PC-9 (cell line): ENCODE measurements at regions of chr20 and their contacts with region 1.

Region 1: GRCh38 chr20:37990571-37991151 is 42.6 kb downstream of the TTI1 start:
- DNase-seq: peak; percentile 74 to 80
- H3K4me3 ChIP-seq: no peak overlapping the region
- H3K27ac ChIP-seq: no peak overlapping the region
- H3K4me1 ChIP-seq: peaks cover 16% of the 10 kb centered on the region
- H3K27me3 ChIP-seq: no peaks in the 10 kb centered on the region
- CTCF ChIP-seq: no peak

Region 2: GRCh38 chr20:37559312-37560027 is 431.2 kb before region 1 on chr20:
- CTCF ChIA-PET with region 1: interaction called, 14 read pairs
- POLR2A ChIA-PET with region 1: no interaction called
- intact Hi-C with region 1: loop called (anchors 2 kb)
- DNase-seq: no peak
- H3K4me3 ChIP-seq: no peak overlapping the region
- H3K27ac ChIP-seq: no peak overlapping the region
- H3K4me1 ChIP-seq: no peaks in the 10 kb centered on the region
- H3K27me3 ChIP-seq: peaks cover 7% of the 10 kb centered on the region; the same call in 1 of the 2 replicates
- CTCF ChIP-seq: no peak

Region 3: DNA sequence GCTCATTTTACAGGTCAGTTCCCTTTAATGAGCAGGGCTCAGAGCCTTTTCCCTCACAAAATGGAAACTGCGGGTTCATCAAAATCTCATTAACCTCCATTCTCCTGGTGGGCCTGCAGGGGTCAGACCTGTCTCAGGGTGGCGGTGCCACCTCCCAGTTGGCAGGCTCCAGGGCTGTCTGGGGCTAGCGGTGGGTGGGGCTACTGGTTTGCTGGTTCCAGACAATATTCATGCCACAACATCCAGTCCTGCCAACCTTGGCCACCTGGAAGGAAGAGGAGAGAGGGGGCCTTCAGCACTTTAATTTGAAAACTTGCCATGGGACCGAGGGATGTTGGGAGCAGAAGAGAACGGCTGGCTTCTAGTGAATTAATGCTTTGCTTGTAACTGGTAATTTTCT is 338.7 kb before region 1 on chr20:
- CTCF ChIA-PET with region 1: no interaction called
- POLR2A ChIA-PET with region 1: no interaction called
- intact Hi-C with region 1: loop called (anchors 1 kb)
- DNase-seq: peak in 1 of 2 experiments; percentile 68
- H3K4me3 ChIP-seq: no peak overlapping the region
- H3K27ac ChIP-seq: no peak overlapping the region
- H3K4me1 ChIP-seq: no peaks in the 10 kb centered on the region
- H3K27me3 ChIP-seq: peaks cover 6% of the 10 kb centered on the region
- CTCF ChIP-seq: peak; percentile 67

Region 4: GRCh38 chr20:37816003-37816402 is 174.7 kb before region 1 on chr20:
- CTCF ChIA-PET with region 1: interaction called, 10 read pairs
- POLR2A ChIA-PET with region 1: no interaction called
- intact Hi-C with region 1: no loop called
- DNase-seq: no peak
- H3K4me3 ChIP-seq: no peak overlapping the region
- H3K27ac ChIP-seq: no peak overlapping the region
- H3K4me1 ChIP-seq: no peaks in the 10 kb centered on the region
- H3K27me3 ChIP-seq: no peaks in the 10 kb centered on the region
- CTCF ChIP-seq: no peak

Region 5: GRCh38 chr20:37880726-37881591 is 109.7 kb before region 1 on chr20:
- CTCF ChIA-PET with region 1: no interaction called
- POLR2A ChIA-PET with region 1: no interaction called
- intact Hi-C with region 1: no loop called
- DNase-seq: peak in 1 of 2 experiments; percentile 45
- H3K4me3 ChIP-seq: no peak overlapping the region
- H3K27ac ChIP-seq: no peak overlapping the region
- H3K4me1 ChIP-seq: no peaks in the 10 kb centered on the region
- H3K27me3 ChIP-seq: no peaks in the 10 kb centered on the region
- CTCF ChIP-seq: no peak

Region 6: DNA sequence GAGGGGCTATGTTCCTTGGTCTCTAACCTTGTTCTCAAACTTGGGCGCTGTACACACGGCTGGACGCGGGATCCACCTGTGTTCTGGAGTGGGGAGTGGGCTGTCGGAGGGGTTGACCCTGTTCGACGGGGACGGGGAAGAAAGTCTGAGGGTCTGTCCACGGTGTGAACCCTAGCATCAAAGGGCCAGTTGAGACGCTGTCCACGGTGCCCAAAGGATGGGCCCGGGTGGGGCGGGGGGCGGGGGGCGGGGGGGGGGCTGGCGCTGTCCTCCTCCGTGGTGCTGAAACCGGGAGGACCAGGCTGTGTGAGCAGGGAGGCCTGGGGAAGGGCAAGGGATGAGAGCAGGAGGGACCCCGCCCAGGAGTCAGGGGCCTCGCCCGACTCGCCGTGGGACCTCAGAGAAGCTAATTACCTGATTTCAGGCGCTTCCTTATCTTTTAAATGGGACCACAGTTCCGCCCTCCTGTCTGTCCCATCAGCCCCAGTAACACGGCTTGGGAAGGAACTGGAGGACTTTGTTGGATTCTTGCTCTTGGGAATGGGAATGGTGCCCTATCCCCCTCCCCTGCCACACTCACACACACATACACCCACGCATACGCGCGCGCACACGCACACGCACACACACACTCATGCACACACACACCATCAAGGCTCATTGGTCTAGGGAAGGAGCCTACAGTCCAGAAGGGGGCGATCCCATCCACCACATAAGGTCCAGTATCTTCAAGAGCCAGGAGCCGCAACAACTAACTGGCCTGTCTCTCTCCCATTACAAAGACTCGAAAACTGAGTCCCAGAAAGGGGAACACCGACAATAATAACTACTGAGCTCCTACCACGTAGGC is 88.8 kb before region 1 on chr20:
- CTCF ChIA-PET with region 1: interaction called, 3 read pairs
- POLR2A ChIA-PET with region 1: no interaction called
- intact Hi-C with region 1: loop called (anchors 1 kb)
- DNase-seq: peak in 1 of 2 experiments; percentile 33
- H3K4me3 ChIP-seq: no peak overlapping the region
- H3K27ac ChIP-seq: no peak overlapping the region
- H3K4me1 ChIP-seq: no peaks in the 10 kb centered on the region
- H3K27me3 ChIP-seq: peaks cover 29% of the 10 kb centered on the region
- CTCF ChIP-seq: peak; percentile 54

Region 7: GRCh38 chr20:37932900-37933299 is 57.8 kb before region 1 on chr20:
- CTCF ChIA-PET with region 1: interaction called, 4 read pairs
- POLR2A ChIA-PET with region 1: interaction called, 4 read pairs
- intact Hi-C with region 1: loop called (anchors 1 kb)
- DNase-seq: peak; percentile 87 to 88
- H3K4me3 ChIP-seq: no peak overlapping the region
- H3K27ac ChIP-seq: no peak overlapping the region
- H3K4me1 ChIP-seq: peaks cover 10% of the 10 kb centered on the region; the same call in 1 of the 2 replicates
- H3K27me3 ChIP-seq: peaks cover 18% of the 10 kb centered on the region
- CTCF ChIP-seq: no peak

Region 8: DNA sequence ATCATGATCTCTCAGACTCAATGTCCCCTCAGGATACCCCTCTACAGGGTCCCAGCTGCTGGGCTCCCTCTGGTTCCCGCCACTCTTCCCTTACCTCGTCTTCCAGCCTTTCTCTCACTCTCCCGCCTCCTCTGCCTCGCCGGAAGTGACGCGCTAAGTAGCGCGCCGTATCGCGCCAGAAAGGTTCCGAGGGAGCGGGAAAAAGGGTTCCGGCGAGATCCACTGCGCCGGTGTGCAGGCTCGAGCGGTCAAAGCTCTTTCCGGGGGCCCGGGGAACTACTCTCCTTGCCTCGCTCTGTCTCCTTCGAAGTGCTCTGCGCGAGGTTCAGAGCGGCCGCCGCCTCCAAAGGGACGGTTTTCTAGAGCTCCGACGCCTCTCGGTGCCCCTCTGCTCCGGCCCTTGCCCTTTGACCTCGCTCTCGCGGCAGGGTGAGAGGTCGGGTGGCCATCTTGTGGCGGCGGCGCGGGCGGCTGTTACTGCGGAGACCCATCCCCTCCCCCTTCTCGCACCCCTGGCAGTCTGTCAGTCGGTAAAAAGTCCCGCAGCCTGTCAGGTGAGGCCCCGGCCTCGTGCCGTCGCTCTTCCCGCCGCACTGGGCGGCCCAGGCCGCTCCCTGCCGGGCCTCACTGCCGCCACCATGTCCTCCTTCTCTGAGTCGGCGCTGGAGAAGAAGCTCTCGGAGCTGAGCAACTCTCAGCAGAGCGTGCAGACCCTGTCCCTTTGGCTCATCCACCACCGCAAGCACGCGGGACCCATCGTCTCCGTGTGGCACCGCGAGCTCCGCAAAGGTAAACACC is 42.8 kb after region 1 on chr20 and contains the starts of genes RPRD1B and TTI1:
- CTCF ChIA-PET with region 1: interaction called, 3 read pairs
- POLR2A ChIA-PET with region 1: interaction called, 4 read pairs
- intact Hi-C with region 1: loop called (anchors 1 kb)
- DNase-seq: peak; percentile 79 to 87
- H3K4me3 ChIP-seq: peak within 1 kb of the TSS; percentile 84
- H3K27ac ChIP-seq: peak within 1 kb of the TSS; percentile 60
- H3K4me1 ChIP-seq: peaks cover 47% of the 10 kb centered on the region
- H3K27me3 ChIP-seq: no peaks in the 10 kb centered on the region
- CTCF ChIP-seq: no peak
- total RNA-seq, gene RPRD1B: 55.1 and 60.1 TPM in 2 replicates
- total RNA-seq, gene TTI1: 29.1 and 34.2 TPM in 2 replicates